Gastrocnemius medialis (tissue), 4 donors: ENCODE measurements at regions of chr2 and their contacts with region 1.

Region 1: DNA sequence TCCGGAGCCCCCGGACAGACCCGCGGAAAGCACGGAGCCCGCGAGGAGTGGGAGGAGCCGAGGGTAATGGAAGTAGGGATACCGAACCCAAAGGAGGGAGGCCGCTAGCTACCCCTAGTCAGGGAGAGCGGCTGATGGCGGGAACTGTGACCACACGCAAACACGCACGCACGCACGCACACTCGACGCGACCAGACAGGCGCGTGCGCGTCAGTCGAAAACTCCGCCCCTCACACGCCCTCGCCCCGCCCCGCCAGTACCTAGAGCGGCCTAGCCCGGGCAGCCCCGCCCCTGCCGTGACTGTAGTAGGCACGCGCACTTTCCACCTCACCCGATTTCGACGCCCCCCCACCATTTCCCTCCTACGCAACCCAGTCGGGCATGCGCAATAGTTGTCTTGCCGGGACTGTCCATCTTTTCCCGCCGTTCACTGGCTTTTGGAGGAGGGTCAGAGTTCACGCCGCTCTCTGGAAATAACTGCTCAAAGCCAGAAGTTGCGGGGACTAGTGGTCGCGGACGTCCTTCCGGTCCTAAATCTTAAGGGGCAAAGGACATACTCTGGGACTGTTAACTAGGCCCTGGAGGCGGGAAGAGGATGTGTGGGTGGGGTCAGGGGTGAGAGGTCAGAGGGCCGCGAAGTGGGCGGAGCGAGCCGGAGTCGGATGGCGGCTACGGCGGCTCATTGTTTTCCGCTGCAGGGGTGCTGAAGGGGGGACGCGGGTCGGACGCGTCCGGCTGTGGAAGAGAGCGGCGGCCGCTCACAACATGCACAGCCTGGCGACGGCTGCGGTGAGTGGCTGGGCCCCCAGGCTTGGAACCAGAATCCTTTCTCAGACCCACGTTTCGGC is at the starts of genes CNOT9 and USP37:
- DNase-seq: peak; percentile 99
- ATAC-seq: peak; percentile 89 to 95
- H3K4me3 ChIP-seq: peak within 1 kb of the TSS; percentile 77 to 90 (median 78)
- H3K27ac ChIP-seq: peak within 1 kb of the TSS; percentile 94 to 96 (median 96)
- H3K4me1 ChIP-seq: peaks cover 31 to 44% of the 10 kb centered on the region in 2 donors
- H3K27me3 ChIP-seq: no peaks in the 10 kb centered on the region
- CTCF ChIP-seq: no peak
- POLR2A ChIP-seq: peak; percentile 75
- total RNA-seq, gene CNOT9: 10.4 to 28.4 (median 20.5) TPM
- total RNA-seq, gene USP37: 7.0 to 12.4 (median 8.0) TPM

Region 2: DNA sequence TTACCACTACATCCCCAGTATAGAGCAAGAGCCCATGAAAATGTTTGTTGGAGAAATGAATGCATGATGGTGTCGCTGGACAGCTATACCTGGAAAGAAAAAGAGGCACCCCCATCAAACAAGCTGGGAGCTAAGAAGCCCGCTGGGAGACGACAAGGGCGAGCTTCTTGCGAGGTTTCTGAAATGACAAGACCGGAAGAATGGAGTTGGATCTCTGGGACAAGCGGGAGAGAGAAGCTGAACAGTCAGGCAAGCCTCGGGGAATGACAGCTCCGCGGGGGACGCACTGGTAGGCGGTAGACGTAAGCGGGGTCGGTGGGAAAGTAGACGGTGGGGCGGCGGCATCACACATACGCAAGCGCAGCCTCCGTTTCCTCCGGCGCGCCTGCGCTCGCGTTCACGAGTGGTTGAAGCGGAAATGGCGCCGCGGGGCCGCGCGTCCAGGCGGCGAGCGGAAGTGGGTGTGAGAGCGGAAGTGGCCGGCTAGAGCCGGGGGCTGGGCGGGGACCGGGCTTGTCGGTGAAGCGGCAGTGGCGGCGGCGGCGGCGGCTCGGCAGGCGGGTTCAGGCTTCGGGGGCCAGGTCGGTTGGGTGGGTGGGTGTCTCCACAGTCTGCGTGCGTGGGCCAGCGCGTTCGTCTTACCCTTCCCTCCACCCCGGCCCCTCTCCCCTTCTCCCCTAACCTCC is 351.6 kb before region 1 on chr2 and contains the start of gene ARPC2:
- in situ Hi-C with region 1: no loop called
- intact Hi-C with region 1: loop called (anchors 5 kb)
- DNase-seq: peak; percentile 86 to 91
- ATAC-seq: peak; percentile 85 to 88
- H3K4me3 ChIP-seq: peak within 1 kb of the TSS; percentile 87 to 99 (median 94)
- H3K27ac ChIP-seq: peak within 1 kb of the TSS; percentile 96 to 99 (median 97)
- H3K4me1 ChIP-seq: peaks cover 38 to 47% of the 10 kb centered on the region in 2 donors
- H3K27me3 ChIP-seq: no peaks in the 10 kb centered on the region
- CTCF ChIP-seq: peak; percentile 9 to 46 (median 42)
- POLR2A ChIP-seq: peak; percentile 92
- total RNA-seq, gene ARPC2: 181 to 231 (median 193) TPM

Region 3: GRCh38 chr2:218292048-218293014 is 276.1 kb before region 1 on chr2 and contains the start of gene TMBIM1:
- in situ Hi-C with region 1: no loop called
- intact Hi-C with region 1: loop called (anchors 5 kb)
- DNase-seq: peak; percentile 56 to 78
- ATAC-seq: peak; percentile 74 to 83
- H3K4me3 ChIP-seq: peak within 1 kb of the TSS; percentile 71 to 100 (median 96)
- H3K27ac ChIP-seq: peak within 1 kb of the TSS; percentile 93 to 100 (median 98)
- H3K4me1 ChIP-seq: peaks cover 43 to 48% of the 10 kb centered on the region in 2 donors
- H3K27me3 ChIP-seq: no peaks in the 10 kb centered on the region
- CTCF ChIP-seq: peak; percentile 75 to 100 (median 98)
- POLR2A ChIP-seq: peak; percentile 89 to 95
- total RNA-seq, gene TMBIM1: 142 to 296 (median 215) TPM

Region 4: DNA sequence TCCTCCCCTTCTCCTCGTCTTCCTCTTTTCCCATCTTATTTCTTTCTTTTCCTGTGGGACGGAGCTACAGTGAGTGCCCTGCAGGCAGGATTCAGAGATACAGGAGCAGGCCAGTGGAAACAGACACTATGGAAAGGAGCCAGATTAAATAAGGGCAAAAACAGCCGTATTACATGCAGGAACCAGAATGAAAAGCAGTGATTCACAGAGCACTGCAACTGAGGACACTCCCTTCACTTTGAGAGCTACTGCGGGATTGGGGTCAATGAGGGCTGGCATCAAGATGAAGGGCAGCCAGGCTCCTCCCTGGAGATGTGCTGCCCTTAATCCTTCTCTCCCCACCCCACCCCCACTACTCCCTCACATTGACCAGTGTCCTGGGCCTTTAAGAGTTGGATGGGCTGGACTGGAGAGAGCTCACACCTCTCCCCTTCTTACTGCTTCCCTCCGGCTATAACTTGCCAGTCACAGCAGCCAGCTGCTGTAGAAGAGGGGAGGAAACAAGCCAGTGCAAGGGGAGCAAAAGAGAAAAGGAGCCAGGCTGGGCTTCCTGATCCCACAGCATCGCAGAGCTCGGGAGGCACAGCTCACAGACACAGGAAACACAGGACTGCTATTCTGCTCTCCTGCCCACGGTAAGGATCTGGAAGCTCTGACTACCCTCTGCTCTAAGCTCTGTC is 39.2 kb after region 1 on chr2 and contains the start of gene PLCD4:
- in situ Hi-C with region 1: no loop called
- intact Hi-C with region 1: loop called (anchors 2 kb)
- DNase-seq: peak; percentile 70 to 89
- ATAC-seq: peak; percentile 65 to 81
- H3K4me3 ChIP-seq: peak within 1 kb of the TSS; percentile 46 to 60 (median 54)
- H3K27ac ChIP-seq: peak within 1 kb of the TSS; percentile 87 to 89 (median 88)
- H3K4me1 ChIP-seq: peaks cover 47 to 60% of the 10 kb centered on the region in 2 donors
- H3K27me3 ChIP-seq: no peaks in the 10 kb centered on the region
- CTCF ChIP-seq: no peak
- POLR2A ChIP-seq: peak; percentile 73 to 84
- total RNA-seq, gene PLCD4: 21.6 to 60.9 (median 43.7) TPM

Region 5: GRCh38 chr2:218832520-218832919 is 264.1 kb after region 1 on chr2:
- in situ Hi-C with region 1: no loop called
- intact Hi-C with region 1: loop called (anchors 10 kb)
- DNase-seq: peak; percentile 77 to 91
- ATAC-seq: peak; percentile 66 to 76
- H3K4me3 ChIP-seq: no peak overlapping the region
- H3K27ac ChIP-seq: peak overlapping the region; percentile 95
- H3K4me1 ChIP-seq: peaks cover 64 to 65% of the 10 kb centered on the region in 2 donors
- H3K27me3 ChIP-seq: no peaks in the 10 kb centered on the region
- CTCF ChIP-seq: no peak
- POLR2A ChIP-seq: no peak